ENCODE measurements at regions of chr2 and their contacts with region 1.

Region 1: DNA sequence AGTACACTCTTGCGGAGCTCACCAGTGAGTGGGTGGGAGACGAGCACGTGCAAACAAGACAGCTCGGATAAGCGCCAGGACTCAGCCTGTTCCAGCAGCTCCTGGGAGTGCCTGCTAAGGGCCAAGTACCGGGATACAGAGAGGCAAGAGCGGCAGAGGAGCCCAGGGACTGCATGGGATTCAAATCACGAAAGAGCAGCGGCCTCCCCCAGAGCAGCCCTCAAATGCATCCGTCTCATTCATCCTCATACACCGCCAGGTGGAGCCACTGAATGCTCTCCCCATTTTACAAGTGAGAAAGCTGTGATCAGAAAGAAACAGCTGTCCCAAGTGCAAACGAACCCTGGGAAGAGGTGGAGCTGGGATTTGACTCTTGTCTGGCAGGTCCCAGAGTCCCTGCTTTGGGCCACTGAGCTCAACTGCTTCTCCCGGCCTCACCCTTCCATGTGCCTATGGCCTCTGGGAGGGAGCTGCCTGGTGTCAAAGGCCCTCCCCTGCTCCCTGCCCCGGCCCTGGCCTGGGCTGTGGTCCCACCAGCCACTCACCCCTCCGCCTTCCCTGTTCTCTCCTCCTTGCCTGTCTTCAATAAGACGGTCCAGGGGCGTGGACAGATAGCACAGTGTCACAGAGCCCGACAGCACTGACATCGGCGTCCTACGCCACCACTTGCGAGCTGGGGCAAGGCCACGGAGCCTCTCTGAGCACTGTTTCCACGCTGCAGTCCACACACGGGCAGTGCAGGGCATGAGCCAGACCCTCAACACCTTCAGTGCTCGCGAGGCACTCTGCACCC is 72.8 kb upstream of the TAF1B start:
- DNase-seq: peak in 4 of 9 donors; percentile 12 to 30 (median 24)
- ATAC-seq: peak; percentile 69
- H3K4me3 ChIP-seq: no peak overlapping the region
- H3K4me3 Mint-ChIP-seq: no peak overlapping the region
- H3K27ac ChIP-seq: no peak overlapping the region
- H3K27ac Mint-ChIP-seq: no peak overlapping the region
- H3K4me1 ChIP-seq: peaks cover 0 to 8% of the 10 kb centered on the region in 2 donors
- H3K4me1 Mint-ChIP-seq: peaks cover 0 to 16% (median 6%) of the 10 kb centered on the region in 7 donors
- H3K27me3 ChIP-seq: no peaks in the 10 kb centered on the region
- H3K27me3 Mint-ChIP-seq: peaks cover 0 to 3% (median 0%) of the 10 kb centered on the region in 5 donors

Region 2: GRCh38 chr2:9799665-9800632 is 29.4 kb after region 1 on chr2:
- CTCF ChIA-PET with region 1: no interaction called
- POLR2A ChIA-PET with region 1: no interaction called
- intact Hi-C with region 1: loop called in 1 of 2 experiments (anchors 1 kb)
- DNase-seq: peak; percentile 55 to 89 (median 76)
- ATAC-seq: peak; percentile 91
- H3K4me3 ChIP-seq: peak overlapping the region; percentile 10
- H3K4me3 Mint-ChIP-seq: peak overlapping the region; percentile 4 to 89 (median 60)
- H3K27ac ChIP-seq: no peak overlapping the region
- H3K27ac Mint-ChIP-seq: peak overlapping the region in 5 of 9 donors; percentile 7 to 85 (median 28)
- H3K4me1 ChIP-seq: peaks cover 9 to 12% of the 10 kb centered on the region in 2 donors
- H3K4me1 Mint-ChIP-seq: peaks cover 11 to 29% (median 14%) of the 10 kb centered on the region in 7 donors
- H3K27me3 ChIP-seq: no peaks in the 10 kb centered on the region
- H3K27me3 Mint-ChIP-seq: peaks cover 0 to 10% (median 0%) of the 10 kb centered on the region in 5 donors